Activated naive CD4-positive, alpha-beta T cell treated with anti-CD3 and anti-CD28 coated beads for 36 hours (primary cell): ENCODE measurements at regions of chr6 and their contacts with region 1.

Region 1: GRCh38 chr6:53426667-53427270 is 78.0 kb upstream of the ELOVL5 start:
- DNase-seq: no peak
- H3K4me3 Mint-ChIP-seq: no peak overlapping the region
- H3K27ac Mint-ChIP-seq: no peak overlapping the region
- H3K4me1 Mint-ChIP-seq: peaks cover 34% of the 10 kb centered on the region
- H3K27me3 Mint-ChIP-seq: peaks cover 14% of the 10 kb centered on the region

Region 2: DNA sequence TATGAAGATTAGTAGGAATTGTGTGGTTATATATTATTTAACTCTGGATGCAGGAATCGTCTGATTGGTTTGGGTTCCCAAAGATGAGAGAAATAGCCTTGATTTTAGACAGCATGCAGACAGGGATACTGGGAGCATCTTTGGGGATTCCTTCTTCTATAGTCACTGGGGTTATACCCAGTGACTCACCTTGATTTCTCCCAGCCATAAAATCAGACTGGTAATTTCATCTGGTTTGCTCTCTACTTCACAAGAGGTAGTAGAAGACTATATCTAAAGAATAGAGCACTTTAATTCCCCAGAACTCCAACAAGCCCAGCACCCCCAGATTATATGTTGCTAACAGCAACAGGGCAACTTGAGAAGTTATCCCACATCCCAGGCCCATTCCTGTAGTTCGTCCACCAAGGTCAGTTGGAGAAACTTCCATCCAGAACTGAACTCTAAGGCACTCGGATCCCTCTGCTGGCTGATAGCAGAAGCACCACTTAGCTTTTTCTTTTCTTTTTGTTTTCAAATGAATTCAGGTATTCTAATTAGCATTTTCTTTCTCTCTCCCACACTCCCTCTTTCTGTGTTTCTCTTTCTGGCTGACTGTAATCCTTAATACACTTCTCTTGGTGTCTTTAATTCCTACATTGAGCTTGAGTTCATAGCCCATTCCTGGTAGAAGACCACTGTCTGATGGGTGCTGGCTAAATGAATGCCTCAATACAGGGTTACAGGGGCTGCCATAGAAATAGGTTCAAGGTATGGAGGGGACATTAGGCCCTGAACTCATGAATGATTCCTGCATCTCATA is 1027.1 kb before region 1 on chr6:
- CTCF ChIA-PET with region 1: no interaction called
- intact Hi-C with region 1: loop called (anchors 10 kb)
- DNase-seq: peak; percentile 64
- H3K4me3 Mint-ChIP-seq: no peak overlapping the region
- H3K27ac Mint-ChIP-seq: peak overlapping the region; percentile 73
- H3K4me1 Mint-ChIP-seq: peaks cover 72% of the 10 kb centered on the region
- H3K27me3 Mint-ChIP-seq: no peaks in the 10 kb centered on the region

Region 3: DNA sequence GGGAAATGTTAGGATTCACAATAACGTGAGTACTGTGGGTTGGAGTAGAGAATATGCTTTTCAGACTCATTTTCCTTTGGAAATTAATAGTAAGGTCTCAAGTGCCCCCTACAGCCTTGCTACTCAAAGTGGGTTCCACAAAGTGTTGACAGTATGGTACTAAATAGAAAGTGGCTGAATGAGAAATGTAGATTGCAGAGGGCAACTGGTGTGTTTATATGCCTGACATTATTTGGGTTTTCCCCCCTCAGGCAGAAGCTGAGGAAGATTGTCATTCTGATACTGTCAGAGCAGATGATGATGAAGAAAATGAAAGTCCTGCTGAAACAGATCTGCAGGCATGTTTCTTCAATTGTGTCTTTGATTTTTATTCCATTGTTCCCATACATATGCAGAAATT is 356.0 kb before region 1 on chr6:
- CTCF ChIA-PET with region 1: no interaction called
- intact Hi-C with region 1: loop called (anchors 2 kb)
- DNase-seq: peak; percentile 56
- H3K4me3 Mint-ChIP-seq: no peak overlapping the region
- H3K27ac Mint-ChIP-seq: no peak overlapping the region
- H3K4me1 Mint-ChIP-seq: peaks cover 42% of the 10 kb centered on the region
- H3K27me3 Mint-ChIP-seq: no peaks in the 10 kb centered on the region

Region 4: GRCh38 chr6:53335208-53335994 is 91.4 kb before region 1 on chr6:
- CTCF ChIA-PET with region 1: no interaction called
- intact Hi-C with region 1: loop called (anchors 1 kb)
- DNase-seq: peak; percentile 79
- H3K4me3 Mint-ChIP-seq: peak overlapping the region; percentile 80
- H3K27ac Mint-ChIP-seq: peak overlapping the region; percentile 99
- H3K4me1 Mint-ChIP-seq: peaks cover 85% of the 10 kb centered on the region
- H3K27me3 Mint-ChIP-seq: no peaks in the 10 kb centered on the region

Region 5: GRCh38 chr6:53359072-53359842 is 67.5 kb before region 1 on chr6:
- CTCF ChIA-PET with region 1: interaction called, 4 read pairs
- intact Hi-C with region 1: loop called (anchors 1 kb)
- DNase-seq: peak; percentile 94
- H3K4me3 Mint-ChIP-seq: peak overlapping the region; percentile 90
- H3K27ac Mint-ChIP-seq: peak overlapping the region; percentile 96
- H3K4me1 Mint-ChIP-seq: peaks cover 39% of the 10 kb centered on the region
- H3K27me3 Mint-ChIP-seq: no peaks in the 10 kb centered on the region

Region 6: GRCh38 chr6:53461041-53461656 is 34.4 kb after region 1 on chr6:
- CTCF ChIA-PET with region 1: no interaction called
- intact Hi-C with region 1: loop called (anchors 1 kb)
- DNase-seq: no peak
- H3K4me3 Mint-ChIP-seq: no peak overlapping the region
- H3K27ac Mint-ChIP-seq: no peak overlapping the region
- H3K4me1 Mint-ChIP-seq: peaks cover 4% of the 10 kb centered on the region
- H3K27me3 Mint-ChIP-seq: no peaks in the 10 kb centered on the region

Region 7: GRCh38 chr6:53544470-53545308 is 117.9 kb after region 1 on chr6 and contains the start of gene GCLC:
- CTCF ChIA-PET with region 1: no interaction called
- intact Hi-C with region 1: loop called (anchors 2 kb)
- DNase-seq: peak; percentile 88
- H3K4me3 Mint-ChIP-seq: peak within 1 kb of the TSS; percentile 94
- H3K27ac Mint-ChIP-seq: peak within 1 kb of the TSS; percentile 86
- H3K4me1 Mint-ChIP-seq: peaks cover 63% of the 10 kb centered on the region
- H3K27me3 Mint-ChIP-seq: no peaks in the 10 kb centered on the region
- total RNA-seq, gene GCLC: 13.9 to 18.1 TPM

Region 8: DNA sequence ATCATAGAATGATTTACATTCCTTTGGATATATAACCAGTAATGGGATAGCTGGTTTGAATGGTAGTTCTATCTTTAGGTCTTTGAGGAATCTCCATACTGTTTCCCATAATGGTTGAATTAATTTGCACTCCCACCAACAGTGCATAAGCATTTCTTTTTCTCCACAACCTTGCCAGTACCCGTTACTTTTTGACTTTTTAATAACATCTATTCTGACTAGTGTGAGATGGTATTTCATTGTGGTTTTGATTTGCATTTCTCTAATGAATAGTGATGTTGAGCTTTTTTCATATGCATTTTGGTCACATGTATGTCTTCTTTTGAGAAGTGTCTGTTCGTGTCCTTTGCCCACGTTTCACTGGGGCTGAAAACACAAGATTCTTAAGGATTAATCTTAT is 988.7 kb after region 1 on chr6:
- CTCF ChIA-PET with region 1: no interaction called
- intact Hi-C with region 1: no loop called
- DNase-seq: no peak
- H3K4me3 Mint-ChIP-seq: no peak overlapping the region
- H3K27ac Mint-ChIP-seq: no peak overlapping the region
- H3K4me1 Mint-ChIP-seq: no peaks in the 10 kb centered on the region
- H3K27me3 Mint-ChIP-seq: no peaks in the 10 kb centered on the region